SK-N-SH (cell line): ENCODE measurements at regions of chr7 and their contacts with region 1.

Region 1: GRCh38 chr7:23462846-23463245 is 7.4 kb downstream of the IGF2BP3 start:
- DNase-seq: peak; percentile 48
- H3K4me3 ChIP-seq: no peak overlapping the region
- H3K27ac ChIP-seq: peak overlapping the region in 1 of 2 experiments; percentile 28; a peak in 3 of 4 replicates
- H3K4me1 ChIP-seq: peaks cover 30 to 36% of the 10 kb centered on the region in 2 experiments
- H3K27me3 ChIP-seq: no peaks in the 10 kb centered on the region
- CTCF ChIP-seq: peak; percentile 65
- EP300 ChIP-seq: no peak; a peak in 1 of 4 replicates
- RAD21 ChIP-seq: peak; percentile 73

Region 2: DNA sequence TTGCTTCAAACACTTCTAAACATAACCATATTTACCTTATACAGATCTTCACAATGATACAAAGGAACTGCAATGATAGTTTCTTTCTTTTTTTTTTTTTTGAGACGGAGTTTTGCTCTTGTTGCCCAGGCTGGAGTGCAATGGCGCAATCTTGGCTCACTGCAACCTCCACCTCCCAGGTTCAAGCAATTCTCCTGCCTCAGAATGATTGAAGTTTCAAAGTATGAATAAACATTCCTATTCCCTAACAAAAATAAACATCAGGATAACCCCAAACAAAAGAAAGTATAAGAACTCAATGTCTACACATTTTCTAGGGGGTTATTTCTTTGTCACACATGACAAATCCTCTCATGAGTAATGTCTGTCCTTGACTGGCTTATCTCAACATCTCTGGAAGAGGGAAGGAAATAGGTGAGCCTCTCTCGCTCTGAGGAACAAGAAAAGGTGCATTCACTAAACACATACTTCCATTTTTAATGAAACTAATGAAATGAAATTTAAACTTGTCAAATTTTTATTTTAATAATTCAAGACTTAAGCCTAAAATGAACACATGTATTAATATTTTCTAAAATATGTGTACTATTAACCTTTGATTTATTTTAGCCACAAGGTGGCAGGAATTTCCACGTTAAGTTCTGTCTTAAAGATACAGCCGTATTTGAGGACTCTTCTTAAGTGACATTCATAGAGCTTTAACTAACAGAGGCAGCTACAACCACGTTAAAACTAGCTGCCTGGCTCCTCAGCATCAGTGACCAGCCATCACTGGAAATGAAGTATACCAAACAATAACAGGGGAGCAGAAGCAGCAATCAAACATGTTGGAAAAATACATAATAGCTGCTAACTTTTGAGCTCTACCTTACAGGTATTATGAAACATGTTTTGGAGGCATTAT is 105.4 kb before region 1 on chr7:
- CTCF ChIA-PET with region 1: interaction called, 11 read pairs
- POLR2A ChIA-PET with region 1: no interaction called
- DNase-seq: no peak
- H3K4me3 ChIP-seq: no peak overlapping the region; a peak in 1 of 4 replicates
- H3K27ac ChIP-seq: peak overlapping the region in 1 of 2 experiments; percentile 58; a peak in 2 of 4 replicates
- H3K4me1 ChIP-seq: peaks cover 0 to 11% of the 10 kb centered on the region in 2 experiments; a peak in 1 of 4 replicates
- H3K27me3 ChIP-seq: no peaks in the 10 kb centered on the region
- CTCF ChIP-seq: peak; percentile 79
- EP300 ChIP-seq: no peak
- RAD21 ChIP-seq: peak; percentile 65

Region 3: DNA sequence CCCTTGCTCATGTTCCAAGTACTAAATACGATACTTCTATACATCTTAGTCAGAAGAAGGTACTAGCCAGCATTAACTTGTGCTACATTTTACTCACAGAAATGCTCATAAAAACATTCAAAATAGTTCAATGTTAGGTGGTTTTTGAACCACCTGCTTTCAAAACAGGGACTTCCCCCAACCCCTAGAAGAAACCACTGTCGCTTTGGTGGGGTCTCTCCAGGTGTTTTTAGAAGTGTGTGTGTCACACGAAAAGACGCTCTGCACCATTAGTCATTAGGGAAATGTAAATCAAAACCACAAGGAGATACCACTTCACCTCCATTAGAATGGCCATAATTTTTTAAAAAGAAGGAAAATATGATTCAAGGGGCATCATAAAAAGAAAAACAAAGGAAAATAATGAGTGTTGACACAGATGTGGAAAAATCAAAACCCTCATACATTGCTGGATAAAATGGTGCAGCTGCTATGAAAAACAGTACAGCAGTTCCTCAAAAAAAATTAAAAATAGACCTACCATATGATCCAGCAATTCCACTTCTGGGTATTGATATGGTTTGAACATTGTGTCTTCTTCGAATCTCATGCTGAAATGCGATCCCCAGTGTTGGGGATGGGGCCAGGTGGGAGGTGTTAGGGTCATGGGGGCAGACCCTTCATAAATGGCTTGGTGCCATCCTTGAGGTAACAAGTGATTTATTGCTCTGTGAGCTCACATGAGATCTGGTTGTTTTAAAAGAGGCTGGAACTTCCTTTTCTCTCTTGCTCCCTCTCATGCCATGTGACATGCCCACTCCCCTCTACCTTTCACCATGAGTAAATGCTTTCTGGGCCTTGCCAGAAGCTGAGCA is 89.5 kb before region 1 on chr7:
- CTCF ChIA-PET with region 1: no interaction called
- POLR2A ChIA-PET with region 1: no interaction called
- DNase-seq: no peak
- H3K4me3 ChIP-seq: no peak overlapping the region
- H3K27ac ChIP-seq: peak overlapping the region in 1 of 2 experiments; percentile 69; a peak in 2 of 4 replicates
- H3K4me1 ChIP-seq: peaks cover 7 to 23% of the 10 kb centered on the region in 2 experiments; a peak in 3 of 4 replicates
- H3K27me3 ChIP-seq: no peaks in the 10 kb centered on the region
- CTCF ChIP-seq: no peak
- EP300 ChIP-seq: 0 out of 4 replicates have a peak, but pooled peaks of 1 of the 2 experiments have one; percentile 36
- RAD21 ChIP-seq: no peak

Region 4: DNA sequence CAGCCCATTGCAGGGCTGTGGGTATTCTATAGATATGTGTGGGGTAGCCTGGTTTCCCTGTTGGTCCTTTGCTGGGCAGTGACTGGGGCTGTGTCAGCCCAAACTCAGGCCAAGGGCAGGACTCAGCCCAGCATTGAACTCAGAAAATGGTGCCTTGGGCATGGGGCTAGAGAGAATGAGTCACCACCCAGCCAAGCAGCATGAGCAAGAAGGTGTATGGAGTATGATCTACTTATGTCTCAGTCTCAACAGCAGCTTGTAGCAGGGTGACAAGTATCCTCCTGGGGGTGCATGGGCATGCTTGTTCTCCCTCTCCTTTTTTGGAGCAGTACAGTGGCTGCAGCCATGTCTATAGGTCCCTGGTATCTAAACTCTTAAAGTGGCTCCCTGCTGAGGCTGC is 279.2 kb after region 1 on chr7:
- CTCF ChIA-PET with region 1: no interaction called
- POLR2A ChIA-PET with region 1: no interaction called
- DNase-seq: no peak
- H3K4me3 ChIP-seq: no peak overlapping the region
- H3K27ac ChIP-seq: no peak overlapping the region
- H3K4me1 ChIP-seq: no peaks in the 10 kb centered on the region
- H3K27me3 ChIP-seq: no peaks in the 10 kb centered on the region
- CTCF ChIP-seq: no peak
- EP300 ChIP-seq: no peak
- RAD21 ChIP-seq: no peak